ENCODE measurements at regions of chr18 and their contacts with region 1.

Region 1: GRCh38 chr18:42028247-42028832 is 73.3 kb downstream of the PIK3C3 start:
- DNase-seq: peak; percentile 47
- H3K4me3 ChIP-seq: no peak overlapping the region
- H3K27ac ChIP-seq: no peak overlapping the region
- H3K4me1 ChIP-seq: no peaks in the 10 kb centered on the region
- H3K27me3 ChIP-seq: no peaks in the 10 kb centered on the region
- CTCF ChIP-seq: peak; percentile 67 to 70
- POLR2A ChIP-seq: no peak

Region 2: GRCh38 chr18:41992066-41992465 is 36.3 kb before region 1 on chr18:
- CTCF ChIA-PET with region 1: interaction called, 17 read pairs
- POLR2A ChIA-PET with region 1: no interaction called
- dilution Hi-C with region 1: no loop called
- intact Hi-C with region 1: no loop called
- DNase-seq: peak; percentile 49
- H3K4me3 ChIP-seq: no peak overlapping the region
- H3K27ac ChIP-seq: peak overlapping the region; percentile 42
- H3K4me1 ChIP-seq: peaks cover 20% of the 10 kb centered on the region
- H3K27me3 ChIP-seq: no peaks in the 10 kb centered on the region
- CTCF ChIP-seq: no peak
- POLR2A ChIP-seq: no peak

Region 3: GRCh38 chr18:42038936-42039335 is 10.6 kb after region 1 on chr18:
- CTCF ChIA-PET with region 1: interaction called, 119 read pairs
- POLR2A ChIA-PET with region 1: no interaction called
- dilution Hi-C with region 1: no loop called
- intact Hi-C with region 1: no loop called
- DNase-seq: peak; percentile 76
- H3K4me3 ChIP-seq: no peak overlapping the region
- H3K27ac ChIP-seq: no peak overlapping the region
- H3K4me1 ChIP-seq: peaks cover 4% of the 10 kb centered on the region
- H3K27me3 ChIP-seq: no peaks in the 10 kb centered on the region
- CTCF ChIP-seq: no peak
- POLR2A ChIP-seq: no peak

Region 4: GRCh38 chr18:42072407-42072806 is 44.1 kb after region 1 on chr18:
- CTCF ChIA-PET with region 1: interaction called, 11 read pairs
- POLR2A ChIA-PET with region 1: no interaction called
- dilution Hi-C with region 1: no loop called
- intact Hi-C with region 1: no loop called
- DNase-seq: no peak
- H3K4me3 ChIP-seq: no peak overlapping the region
- H3K27ac ChIP-seq: no peak overlapping the region
- H3K4me1 ChIP-seq: no peaks in the 10 kb centered on the region
- H3K27me3 ChIP-seq: no peaks in the 10 kb centered on the region
- CTCF ChIP-seq: no peak
- POLR2A ChIP-seq: no peak

Region 5: GRCh38 chr18:42545825-42546224 is 517.5 kb after region 1 on chr18:
- CTCF ChIA-PET with region 1: no interaction called
- POLR2A ChIA-PET with region 1: no interaction called
- dilution Hi-C with region 1: no loop called
- intact Hi-C with region 1: no loop called
- DNase-seq: no peak
- H3K4me3 ChIP-seq: no peak overlapping the region
- H3K27ac ChIP-seq: no peak overlapping the region
- H3K4me1 ChIP-seq: no peaks in the 10 kb centered on the region
- H3K27me3 ChIP-seq: no peaks in the 10 kb centered on the region
- CTCF ChIP-seq: no peak
- POLR2A ChIP-seq: no peak